A673 (cell line): ENCODE measurements at regions of chr5 and their contacts with region 1.

Region 1: GRCh38 chr5:45038366-45038987 is 229.7 kb downstream of the MRPS30 start:
- DNase-seq: peak; percentile 75
- H3K4me3 ChIP-seq: no peak overlapping the region
- H3K27ac ChIP-seq: no peak overlapping the region
- H3K4me1 ChIP-seq: no peaks in the 10 kb centered on the region
- H3K27me3 ChIP-seq: no peaks in the 10 kb centered on the region
- CTCF ChIP-seq: peak; percentile 73

Region 2: GRCh38 chr5:45274241-45274640 is 235.8 kb after region 1 on chr5:
- CTCF ChIA-PET with region 1: no interaction called
- POLR2A ChIA-PET with region 1: no interaction called
- intact Hi-C with region 1: no loop called
- DNase-seq: no peak
- H3K4me3 ChIP-seq: no peak overlapping the region
- H3K27ac ChIP-seq: no peak overlapping the region
- H3K4me1 ChIP-seq: peaks cover 7% of the 10 kb centered on the region
- H3K27me3 ChIP-seq: no peaks in the 10 kb centered on the region
- CTCF ChIP-seq: no peak

Region 3: GRCh38 chr5:45385321-45386058 is 347.0 kb after region 1 on chr5:
- CTCF ChIA-PET with region 1: no interaction called
- POLR2A ChIA-PET with region 1: no interaction called
- intact Hi-C with region 1: loop called (anchors 10 kb)
- DNase-seq: peak; percentile 96
- H3K4me3 ChIP-seq: no peak overlapping the region
- H3K27ac ChIP-seq: peak overlapping the region; percentile 25
- H3K4me1 ChIP-seq: peaks cover 40% of the 10 kb centered on the region
- H3K27me3 ChIP-seq: no peaks in the 10 kb centered on the region
- CTCF ChIP-seq: no peak

Region 4: DNA sequence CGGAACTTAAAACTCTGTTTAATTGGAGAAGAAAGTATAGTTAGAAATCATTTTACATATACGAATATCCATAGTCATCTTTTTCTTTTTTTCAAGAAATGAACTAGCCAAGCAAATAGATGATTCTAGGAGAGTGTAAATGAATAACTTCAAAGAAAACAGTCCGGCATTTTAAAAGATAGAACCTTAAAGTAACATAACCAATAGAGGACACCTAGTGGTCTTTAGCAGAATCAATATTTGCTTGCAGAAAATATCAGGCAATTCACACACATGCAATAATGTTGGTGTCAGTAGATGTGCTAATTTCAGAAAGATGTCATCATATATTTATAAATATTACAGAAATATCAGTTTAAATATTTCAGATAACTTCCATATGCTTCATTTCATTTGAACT is 600.6 kb after region 1 on chr5:
- CTCF ChIA-PET with region 1: no interaction called
- POLR2A ChIA-PET with region 1: no interaction called
- intact Hi-C with region 1: loop called (anchors 2 kb)
- DNase-seq: peak; percentile 20
- H3K4me3 ChIP-seq: no peak overlapping the region
- H3K27ac ChIP-seq: no peak overlapping the region
- H3K4me1 ChIP-seq: no peaks in the 10 kb centered on the region
- H3K27me3 ChIP-seq: peaks cover 12% of the 10 kb centered on the region
- CTCF ChIP-seq: peak; percentile 60

Region 5: GRCh38 chr5:45696206-45696836 is 657.8 kb after region 1 on chr5 and contains the start of gene HCN1:
- CTCF ChIA-PET with region 1: no interaction called
- POLR2A ChIA-PET with region 1: no interaction called
- intact Hi-C with region 1: loop called (anchors 2 kb)
- DNase-seq: peak; percentile 88
- H3K4me3 ChIP-seq: peak within 1 kb of the TSS; percentile 25
- H3K27ac ChIP-seq: no peak within 1 kb of the TSS
- H3K4me1 ChIP-seq: peaks cover 8% of the 10 kb centered on the region
- H3K27me3 ChIP-seq: peaks cover 44% of the 10 kb centered on the region
- CTCF ChIP-seq: peak; percentile 86
- total RNA-seq, gene HCN1: 0.04 and 0.09 TPM in 2 replicates